Activated naive CD4-positive, alpha-beta T cell treated with anti-CD3 and anti-CD28 coated beads for 36 hours (primary cell): ENCODE measurements at regions of chr9 and their contacts with region 1.

Region 1: GRCh38 chr9:128863647-128864046 is 18.1 kb downstream of the KYAT1 start:
- DNase-seq: peak; percentile 90
- H3K4me3 Mint-ChIP-seq: no peak overlapping the region
- H3K27ac Mint-ChIP-seq: no peak overlapping the region
- H3K4me1 Mint-ChIP-seq: peaks cover 9% of the 10 kb centered on the region
- H3K27me3 Mint-ChIP-seq: no peaks in the 10 kb centered on the region

Region 2: GRCh38 chr9:128733256-128733655 is 130.4 kb before region 1 on chr9:
- CTCF ChIA-PET with region 1: no interaction called
- intact Hi-C with region 1: no loop called
- DNase-seq: peak; percentile 53
- H3K4me3 Mint-ChIP-seq: no peak overlapping the region
- H3K27ac Mint-ChIP-seq: no peak overlapping the region
- H3K4me1 Mint-ChIP-seq: no peaks in the 10 kb centered on the region
- H3K27me3 Mint-ChIP-seq: no peaks in the 10 kb centered on the region

Region 3: DNA sequence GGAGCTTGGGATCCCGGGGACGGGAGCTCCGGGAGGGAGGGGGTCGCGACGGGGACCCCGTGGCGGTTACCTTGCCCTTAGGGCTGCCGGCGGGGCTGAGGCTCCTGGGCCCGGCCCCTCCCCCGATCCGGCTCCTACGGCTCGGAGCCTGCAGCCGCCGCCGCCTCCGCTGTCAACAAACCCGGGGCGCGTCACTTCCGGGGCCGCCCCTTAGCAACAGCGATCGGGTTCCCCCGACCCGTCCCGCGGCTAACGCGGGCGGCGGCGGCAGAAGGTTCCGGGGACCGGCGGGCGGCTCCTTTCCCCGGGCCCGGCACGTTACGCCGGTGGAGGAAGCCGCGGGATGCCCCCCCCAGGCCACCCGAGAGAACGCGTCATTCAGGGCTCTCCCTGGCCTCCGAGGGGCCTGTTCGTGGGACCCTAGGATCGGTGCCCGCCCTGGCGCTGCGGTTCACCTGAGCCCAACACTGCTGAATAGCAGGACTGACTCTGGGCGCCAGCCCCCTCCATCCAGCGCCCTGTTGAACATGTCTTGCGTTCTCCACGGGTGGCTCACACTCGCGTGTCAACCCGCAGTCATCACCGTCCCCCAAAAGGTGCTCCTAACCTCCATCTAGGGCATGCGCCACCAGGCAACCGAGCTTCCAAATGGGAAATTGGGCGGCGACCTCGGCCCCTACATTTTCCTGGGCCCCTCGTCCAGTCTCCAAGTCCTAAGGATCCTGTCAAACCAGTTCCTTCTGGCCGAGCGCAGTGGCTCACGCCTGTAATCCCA is 91.7 kb before region 1 on chr9 and contains the start of gene ZER1:
- CTCF ChIA-PET with region 1: no interaction called
- intact Hi-C with region 1: no loop called
- DNase-seq: peak; percentile 95
- H3K4me3 Mint-ChIP-seq: peak within 1 kb of the TSS; percentile 95
- H3K27ac Mint-ChIP-seq: peak within 1 kb of the TSS; percentile 90
- H3K4me1 Mint-ChIP-seq: peaks cover 24% of the 10 kb centered on the region
- H3K27me3 Mint-ChIP-seq: no peaks in the 10 kb centered on the region
- total RNA-seq, gene ZER1: 9.9 to 11.0 TPM

Region 4: DNA sequence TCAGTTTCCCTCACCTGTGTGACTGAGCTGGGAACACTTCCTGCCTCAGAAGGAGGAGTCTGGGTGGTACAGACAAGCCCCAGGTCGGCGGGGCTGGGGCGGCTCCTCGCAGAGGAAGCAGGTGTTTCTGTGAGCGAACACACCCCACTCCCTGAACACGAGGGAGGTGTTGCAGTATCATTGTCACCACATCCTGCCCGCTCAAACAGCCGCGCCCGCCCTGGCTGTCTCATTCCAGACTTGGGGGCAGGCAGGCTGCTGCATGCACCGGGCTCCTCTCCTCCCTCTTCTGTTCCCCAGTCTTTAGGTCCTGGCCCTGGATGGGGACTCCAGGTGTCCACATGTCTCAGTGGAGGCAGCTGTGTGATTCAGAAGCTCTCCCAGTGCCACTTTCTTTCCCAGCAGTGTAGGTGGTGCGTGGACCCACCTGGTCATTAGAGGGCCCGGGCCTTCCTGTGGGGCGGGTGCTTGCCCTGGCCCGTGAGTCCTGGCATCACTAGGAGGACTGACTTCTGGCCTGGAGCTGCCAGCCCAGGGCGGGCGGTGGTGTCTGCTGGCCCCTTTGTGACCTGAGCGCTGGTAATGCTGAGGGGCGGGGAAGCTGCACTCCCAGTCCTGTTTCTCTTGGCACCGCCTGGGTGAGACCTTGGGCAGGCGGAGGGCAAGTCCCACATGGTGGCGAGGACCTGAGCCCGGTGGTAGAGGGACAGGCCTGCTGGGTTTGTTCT is 38.9 kb after region 1 on chr9:
- CTCF ChIA-PET with region 1: interaction called, 4 read pairs
- intact Hi-C with region 1: loop called (anchors 1 kb)
- DNase-seq: peak; percentile 95
- H3K4me3 Mint-ChIP-seq: peak overlapping the region; percentile 27
- H3K27ac Mint-ChIP-seq: peak overlapping the region; percentile 75
- H3K4me1 Mint-ChIP-seq: peaks cover 70% of the 10 kb centered on the region
- H3K27me3 Mint-ChIP-seq: no peaks in the 10 kb centered on the region

Region 5: DNA sequence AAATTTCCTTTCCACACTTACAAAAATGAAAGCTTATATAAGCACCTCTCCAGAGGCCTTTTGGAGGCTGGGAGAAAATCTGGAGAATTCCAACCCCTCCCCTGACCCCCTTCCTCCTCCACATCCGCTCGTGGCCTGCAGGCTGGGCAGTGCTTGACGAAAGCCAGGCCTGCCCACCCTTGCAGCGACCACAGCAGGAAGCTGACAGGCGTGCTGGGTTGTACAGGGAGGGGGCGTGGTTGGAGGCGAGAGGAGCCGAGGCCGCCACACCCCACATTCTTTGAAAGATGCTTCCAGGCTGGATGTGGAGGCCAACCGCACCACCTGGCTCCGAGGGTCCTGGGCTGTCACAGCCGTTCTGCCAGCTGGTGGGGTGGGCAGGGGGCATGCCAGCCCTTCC is 362.2 kb after region 1 on chr9:
- CTCF ChIA-PET with region 1: no interaction called
- intact Hi-C with region 1: no loop called
- DNase-seq: peak; percentile 42
- H3K4me3 Mint-ChIP-seq: no peak overlapping the region
- H3K27ac Mint-ChIP-seq: no peak overlapping the region
- H3K4me1 Mint-ChIP-seq: peaks cover 24% of the 10 kb centered on the region
- H3K27me3 Mint-ChIP-seq: no peaks in the 10 kb centered on the region